Right ventricle myocardium superior (tissue), 1 donor: ENCODE measurements at regions of chr7 and their contacts with region 1.

Region 1: GRCh38 chr7:93902777-93903423 is 3.5 kb upstream of the GNGT1 start:
- DNase-seq: no peak
- ATAC-seq: peak; percentile 67

Region 2: GRCh38 chr7:93636276-93636675 is 266.6 kb before region 1 on chr7:
- intact Hi-C with region 1: no loop called
- DNase-seq: no peak
- ATAC-seq: no peak

Region 3: GRCh38 chr7:94276795-94277194 is 373.9 kb after region 1 on chr7:
- intact Hi-C with region 1: loop called (anchors 10 kb)
- DNase-seq: no peak
- ATAC-seq: peak; percentile 89